Activated B cell treated with CpG ODN at 0.5 μM for 24 hours (primary cell): ENCODE measurements at regions of chr1 and their contacts with region 1.

Region 1: DNA sequence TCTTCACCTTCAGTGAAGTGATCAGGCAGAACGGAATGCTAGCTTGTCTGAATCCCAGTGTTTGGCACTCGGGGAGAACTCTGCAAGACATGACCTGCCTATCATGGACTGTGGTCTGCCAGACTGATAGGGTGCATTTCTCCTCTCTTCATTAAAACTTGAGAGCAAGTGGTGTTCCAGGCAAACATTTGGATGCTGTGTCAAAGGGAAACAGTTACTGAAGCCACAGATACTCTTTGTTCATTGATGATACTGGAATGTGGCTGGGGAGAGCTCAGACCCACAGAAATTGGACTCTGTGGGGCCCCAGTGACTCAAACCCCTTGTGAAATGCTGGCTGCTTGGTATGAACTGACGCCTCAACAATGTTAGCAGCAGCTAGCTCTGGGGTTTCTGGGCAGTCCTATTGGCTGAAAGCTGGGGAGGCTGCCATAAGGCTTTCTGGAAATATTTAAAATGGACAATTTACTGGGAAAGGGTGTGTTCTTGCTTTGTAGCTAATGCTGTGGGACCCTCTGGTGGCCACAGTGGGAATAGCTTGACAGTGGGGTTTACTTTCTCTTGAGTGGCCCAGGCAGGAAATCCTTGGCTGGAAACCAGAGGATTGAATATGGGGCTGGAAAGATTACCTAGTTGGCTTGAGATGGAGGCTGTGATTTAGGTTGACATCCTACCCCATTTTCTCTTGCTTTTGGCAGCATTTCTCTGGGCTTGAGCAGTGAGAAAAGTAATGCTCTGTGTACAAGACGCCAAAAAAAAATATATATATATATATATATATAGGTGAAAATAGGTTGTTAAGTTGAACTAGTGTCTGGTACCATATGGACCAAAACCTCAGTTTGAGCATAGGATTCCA is 8.0 kb upstream of the S100A10 start:
- DNase-seq: peak; percentile 51
- ATAC-seq: peak; percentile 85
- H3K4me3 Mint-ChIP-seq: no peak overlapping the region
- H3K27ac Mint-ChIP-seq: no peak overlapping the region
- H3K4me1 Mint-ChIP-seq: no peaks in the 10 kb centered on the region
- H3K27me3 Mint-ChIP-seq: peaks cover 20% of the 10 kb centered on the region
- CTCF ChIP-seq: peak; percentile 95

Region 2: GRCh38 chr1:151594143-151594625 is 407.4 kb before region 1 on chr1:
- CTCF ChIA-PET with region 1: interaction called, 10 read pairs
- POLR2A ChIA-PET with region 1: no interaction called
- intact Hi-C with region 1: loop called (anchors 1 kb)
- DNase-seq: peak; percentile 66
- ATAC-seq: peak; percentile 97
- H3K4me3 Mint-ChIP-seq: peak overlapping the region; percentile 69
- H3K27ac Mint-ChIP-seq: peak overlapping the region; percentile 46
- H3K4me1 Mint-ChIP-seq: peaks cover 10% of the 10 kb centered on the region
- H3K27me3 Mint-ChIP-seq: peaks cover 11% of the 10 kb centered on the region
- CTCF ChIP-seq: peak; percentile 45

Region 3: GRCh38 chr1:151702936-151703335 is 298.7 kb before region 1 on chr1:
- CTCF ChIA-PET with region 1: no interaction called
- POLR2A ChIA-PET with region 1: no interaction called
- intact Hi-C with region 1: no loop called
- DNase-seq: no peak
- ATAC-seq: no peak
- H3K4me3 Mint-ChIP-seq: no peak overlapping the region
- H3K27ac Mint-ChIP-seq: no peak overlapping the region
- H3K4me1 Mint-ChIP-seq: peaks cover 5% of the 10 kb centered on the region
- H3K27me3 Mint-ChIP-seq: no peaks in the 10 kb centered on the region
- CTCF ChIP-seq: no peak

Region 4: DNA sequence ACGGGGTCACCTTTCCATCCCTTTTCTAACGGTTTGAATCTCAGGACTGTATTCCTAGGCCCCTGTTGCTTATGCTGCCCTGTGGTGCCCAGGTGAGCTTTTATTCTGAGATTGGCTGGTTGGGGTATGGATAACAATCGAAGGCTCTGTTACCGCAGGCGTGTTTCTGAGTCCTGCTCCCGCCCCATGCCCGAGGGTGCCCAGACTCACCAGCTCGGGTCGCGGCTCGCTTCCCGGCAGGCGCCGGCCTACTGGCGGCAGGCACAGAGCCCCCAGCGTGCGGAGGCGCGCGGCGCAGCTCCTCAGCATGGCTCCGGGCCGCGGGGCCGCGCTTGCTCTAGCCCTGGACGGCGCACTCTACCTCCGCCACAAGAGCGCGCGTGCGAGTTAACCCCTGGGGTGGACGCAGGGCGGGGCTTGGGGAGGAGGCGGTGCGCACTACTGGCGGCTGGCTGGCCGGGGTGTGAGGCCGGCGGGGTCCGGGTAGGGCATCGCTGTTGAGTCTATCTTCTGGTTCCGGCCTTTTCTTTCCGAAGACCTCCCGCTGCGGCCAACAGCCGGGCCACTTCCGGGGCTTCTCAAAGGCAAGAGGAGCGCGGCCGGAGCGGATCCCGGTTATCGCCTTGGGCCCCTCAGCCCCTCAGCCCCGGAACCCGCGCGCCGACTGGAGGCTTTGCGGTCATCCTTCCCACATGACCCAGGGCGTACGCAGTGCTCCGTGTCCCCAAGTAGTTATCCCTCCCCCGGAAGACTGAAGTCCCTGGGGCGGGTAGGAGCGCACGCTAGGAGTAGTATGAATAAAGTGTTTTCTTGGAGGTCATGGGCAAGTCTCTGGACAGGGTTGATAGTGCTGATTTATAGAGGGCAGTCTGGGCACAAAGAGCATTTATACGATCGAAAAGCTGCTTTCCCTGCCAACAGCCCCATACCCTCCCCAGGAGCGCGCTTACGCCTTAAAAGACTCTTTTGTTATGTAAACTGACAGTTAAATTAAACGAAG is 92.2 kb before region 1 on chr1 and contains the start of gene THEM4:
- CTCF ChIA-PET with region 1: interaction called, 26 read pairs
- POLR2A ChIA-PET with region 1: interaction called, 7 read pairs
- intact Hi-C with region 1: no loop called
- DNase-seq: peak; percentile 93
- ATAC-seq: peak; percentile 99
- H3K4me3 Mint-ChIP-seq: peak within 1 kb of the TSS; percentile 90
- H3K27ac Mint-ChIP-seq: peak within 1 kb of the TSS; percentile 92
- H3K4me1 Mint-ChIP-seq: peaks cover 16% of the 10 kb centered on the region
- H3K27me3 Mint-ChIP-seq: no peaks in the 10 kb centered on the region
- CTCF ChIP-seq: no peak
- total RNA-seq, gene THEM4: 20.4 and 22.8 TPM in 2 replicates

Region 5: DNA sequence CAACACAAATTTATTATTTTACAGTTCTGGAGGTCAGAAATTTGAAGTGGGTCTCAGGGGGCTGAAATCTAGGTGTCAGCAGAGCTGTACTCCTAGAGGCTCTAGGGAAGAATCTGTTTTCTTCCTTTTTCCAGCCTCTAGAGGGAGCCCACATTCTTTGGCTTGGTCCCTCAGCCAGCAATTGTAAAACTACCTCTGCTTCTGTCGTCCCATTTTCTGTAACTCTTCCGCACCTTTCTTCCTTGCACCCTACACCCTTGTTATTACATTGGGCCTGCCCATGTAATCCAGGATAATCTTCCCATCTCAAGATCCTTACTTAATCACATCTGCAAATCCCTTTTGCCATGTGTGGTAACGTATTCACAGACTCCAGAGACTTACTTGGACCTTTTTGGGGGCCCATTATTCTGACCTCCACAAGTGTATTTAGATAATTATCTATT is 67.5 kb before region 1 on chr1:
- CTCF ChIA-PET with region 1: interaction called, 147 read pairs
- POLR2A ChIA-PET with region 1: interaction called, 7 read pairs
- intact Hi-C with region 1: loop called (anchors 1 kb)
- DNase-seq: no peak
- ATAC-seq: peak; percentile 90
- H3K4me3 Mint-ChIP-seq: no peak overlapping the region
- H3K27ac Mint-ChIP-seq: no peak overlapping the region
- H3K4me1 Mint-ChIP-seq: peaks cover 2% of the 10 kb centered on the region
- H3K27me3 Mint-ChIP-seq: peaks cover 11% of the 10 kb centered on the region
- CTCF ChIP-seq: peak; percentile 86

Region 6: DNA sequence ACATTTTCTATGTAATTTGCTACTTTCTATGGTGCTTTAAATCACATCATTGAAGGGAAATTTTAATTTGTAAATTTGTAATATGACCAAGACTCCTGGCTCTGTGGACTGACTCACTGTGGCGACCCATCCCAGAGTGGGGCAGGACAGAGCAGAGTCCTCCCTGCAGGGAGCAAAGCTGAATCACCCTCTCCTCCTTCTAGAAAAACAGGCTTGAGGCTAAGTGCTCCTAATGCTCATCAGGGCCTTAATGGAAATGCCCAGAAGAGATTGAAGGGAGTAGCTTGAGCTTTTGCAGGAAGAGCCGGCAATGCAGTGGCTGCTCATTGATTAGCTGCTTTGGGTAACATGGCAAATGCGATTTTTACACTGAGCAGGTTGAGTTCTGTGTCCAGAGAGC is 24.8 kb before region 1 on chr1:
- CTCF ChIA-PET with region 1: interaction called, 204 read pairs
- POLR2A ChIA-PET with region 1: interaction called, 5 read pairs
- intact Hi-C with region 1: no loop called
- DNase-seq: no peak
- ATAC-seq: no peak
- H3K4me3 Mint-ChIP-seq: no peak overlapping the region
- H3K27ac Mint-ChIP-seq: no peak overlapping the region
- H3K4me1 Mint-ChIP-seq: no peaks in the 10 kb centered on the region
- H3K27me3 Mint-ChIP-seq: peaks cover 7% of the 10 kb centered on the region
- CTCF ChIP-seq: no peak

Region 7: DNA sequence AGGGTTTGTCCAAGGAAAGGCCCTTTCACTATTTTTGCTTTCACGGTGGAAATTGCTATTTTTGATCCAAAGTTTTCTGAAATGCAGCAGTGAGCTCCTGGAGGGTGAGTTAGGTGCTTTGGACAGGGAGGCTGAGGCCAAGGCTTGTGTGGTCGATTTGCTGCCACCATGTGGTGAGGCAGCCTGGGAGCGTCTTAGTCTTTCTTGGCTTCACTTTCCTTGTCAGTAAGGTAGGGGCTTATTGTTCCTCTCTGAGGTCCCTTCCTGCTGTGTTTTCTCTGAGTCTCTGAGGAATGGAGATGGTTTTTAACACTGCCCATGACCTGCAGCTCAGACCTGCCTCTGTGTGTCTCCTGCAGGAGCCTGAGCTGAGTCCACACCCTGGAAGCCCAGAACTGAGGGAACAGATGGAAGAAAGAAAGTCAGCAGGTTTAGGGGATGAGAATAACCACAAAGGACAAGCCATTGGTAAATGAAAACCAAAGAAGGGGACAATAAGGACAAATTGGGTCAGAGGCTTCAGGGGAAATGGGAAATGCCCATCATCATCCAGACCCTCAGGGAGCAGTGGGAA is 12.1 kb after region 1 on chr1:
- CTCF ChIA-PET with region 1: interaction called, 17 read pairs
- POLR2A ChIA-PET with region 1: no interaction called
- intact Hi-C with region 1: no loop called
- DNase-seq: no peak
- ATAC-seq: no peak
- H3K4me3 Mint-ChIP-seq: no peak overlapping the region
- H3K27ac Mint-ChIP-seq: no peak overlapping the region
- H3K4me1 Mint-ChIP-seq: no peaks in the 10 kb centered on the region
- H3K27me3 Mint-ChIP-seq: peaks cover 28% of the 10 kb centered on the region
- CTCF ChIP-seq: no peak